HEK293 (cell line): ENCODE measurements at regions of chr10 and their contacts with region 1.

Region 1: DNA sequence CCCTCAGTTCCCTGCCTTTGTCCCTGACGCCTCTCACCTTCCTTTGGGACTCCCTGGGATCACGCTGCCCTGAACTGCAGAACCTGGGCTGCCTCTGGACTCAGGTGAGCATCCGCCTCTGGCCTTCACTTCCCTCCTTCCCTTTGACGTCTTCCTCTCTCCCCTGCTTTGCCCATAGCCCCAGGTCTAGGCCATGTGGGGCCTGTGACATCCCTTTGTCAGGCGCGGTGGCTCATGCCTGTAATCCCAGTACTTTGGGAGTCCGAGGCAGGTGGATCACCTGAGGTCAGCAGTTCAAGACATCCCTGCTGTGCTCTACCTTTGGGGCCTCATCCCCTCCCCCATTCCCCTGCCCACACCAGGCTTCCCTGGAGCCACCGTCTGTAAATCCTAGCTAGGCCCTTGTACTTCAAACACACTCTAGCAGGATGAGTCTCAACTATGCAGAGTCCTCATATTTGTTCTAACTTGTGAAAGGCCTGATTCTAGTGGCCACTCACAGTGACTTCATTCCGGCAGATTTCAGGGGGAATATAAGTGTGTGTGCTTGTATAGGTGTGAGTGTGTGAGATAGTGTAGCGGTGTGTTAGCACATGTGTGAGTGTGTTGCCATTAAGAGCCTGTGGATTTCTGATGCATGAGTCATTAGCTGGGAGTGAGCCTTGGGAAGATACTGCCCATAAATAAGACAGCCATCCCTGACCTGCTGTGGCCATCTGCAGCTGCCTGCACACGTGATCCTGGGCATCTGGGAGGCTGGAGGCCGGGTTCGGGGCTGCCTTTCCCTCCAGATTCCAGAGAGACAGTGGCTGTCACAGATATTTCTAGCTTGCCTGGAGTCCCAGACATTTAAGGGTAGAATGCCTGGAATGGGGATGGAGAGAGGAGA is 1.8 kb upstream of the NEURL1 start:
- H3K4me3 ChIP-seq: no peak overlapping the region
- H3K27ac ChIP-seq: no peak overlapping the region
- H3K4me1 ChIP-seq: no peaks in the 10 kb centered on the region
- CTCF ChIP-seq: no peak

Region 2: GRCh38 chr10:103125323-103126267 is 366.1 kb before region 1 on chr10:
- CTCF ChIA-PET with region 1: no interaction called
- POLR2A ChIA-PET with region 1: no interaction called
- H3K4me3 ChIP-seq: no peak overlapping the region
- H3K27ac ChIP-seq: no peak overlapping the region
- H3K4me1 ChIP-seq: peaks cover 31% of the 10 kb centered on the region
- CTCF ChIP-seq: no peak

Region 3: DNA sequence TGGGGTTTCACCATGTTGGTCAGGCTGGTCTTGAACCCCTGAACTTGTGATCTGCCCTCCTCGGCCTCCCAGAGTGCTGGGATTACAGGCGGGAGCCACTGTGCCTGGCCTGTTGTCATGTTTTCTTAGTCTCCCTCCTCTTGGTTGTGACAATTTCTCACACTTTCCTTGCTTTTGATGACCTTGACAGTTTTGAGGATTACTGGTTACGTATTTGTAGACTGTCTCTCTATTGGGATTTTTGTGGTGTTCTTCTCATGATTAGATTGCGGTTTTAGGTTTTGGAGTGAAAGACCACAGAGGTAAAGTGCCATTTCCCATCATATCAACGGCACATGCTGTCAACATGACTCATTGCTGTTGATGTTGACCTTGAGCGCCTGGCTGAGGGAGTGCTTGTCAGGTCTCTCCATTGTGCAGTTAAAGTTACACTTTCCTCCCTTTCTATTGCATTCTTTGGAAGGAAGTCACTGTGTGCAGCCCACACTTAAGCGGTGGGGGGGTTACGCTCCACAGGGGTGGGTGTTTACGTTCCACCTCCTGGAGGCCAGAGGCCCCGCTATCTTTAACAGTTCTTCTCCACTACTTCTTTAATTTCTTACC is 12.5 kb after region 1 on chr10:
- CTCF ChIA-PET with region 1: interaction called, 5 read pairs
- POLR2A ChIA-PET with region 1: interaction called, 15 read pairs
- H3K4me3 ChIP-seq: no peak overlapping the region
- H3K27ac ChIP-seq: no peak overlapping the region; the same call in 1 of the 2 replicates
- H3K4me1 ChIP-seq: peaks cover 4% of the 10 kb centered on the region; the same call in 1 of the 2 replicates
- CTCF ChIP-seq: no peak

Region 4: DNA sequence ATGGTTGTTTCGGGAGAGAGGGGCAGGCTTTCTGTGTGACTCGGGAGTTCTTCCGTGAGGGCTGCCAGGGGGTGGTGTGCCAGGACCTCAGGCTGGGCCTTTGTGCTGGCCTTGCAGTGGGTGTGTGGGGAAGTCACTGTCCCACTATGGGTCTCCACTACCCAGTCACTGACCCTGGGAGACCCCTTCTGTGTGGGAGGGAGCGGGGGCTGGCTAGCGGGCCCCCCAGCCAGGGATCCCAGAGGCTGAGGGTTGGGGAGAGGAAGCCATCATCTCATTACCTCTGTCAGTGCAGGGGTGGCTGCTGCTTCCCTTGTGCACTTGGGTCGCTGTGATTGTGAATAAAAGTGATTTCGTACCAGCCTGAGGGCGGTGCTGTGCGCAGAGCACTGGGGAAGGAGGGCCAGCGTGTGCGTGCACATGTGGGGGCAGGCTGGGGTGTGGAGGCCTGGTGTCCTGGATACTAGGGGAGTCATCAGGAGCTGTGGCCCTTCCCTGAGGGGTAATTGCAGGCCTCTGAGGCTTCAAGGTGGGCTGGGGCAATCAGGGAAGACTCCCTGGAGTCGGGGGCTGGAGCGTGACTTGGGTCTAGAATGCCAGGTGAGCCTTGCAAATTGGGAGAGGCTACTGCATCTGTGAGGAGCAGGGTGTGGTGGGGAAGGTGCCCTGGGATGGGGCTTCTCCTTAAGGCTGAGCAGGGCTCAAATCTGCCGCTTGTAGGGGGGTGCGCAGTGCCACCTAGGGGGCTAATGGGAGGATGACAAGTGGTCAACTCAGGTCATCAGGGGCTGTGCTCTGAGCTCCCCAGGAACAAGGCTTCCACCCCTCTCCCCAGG is 100.7 kb after region 1 on chr10:
- CTCF ChIA-PET with region 1: interaction called, 16 read pairs
- POLR2A ChIA-PET with region 1: no interaction called
- H3K4me3 ChIP-seq: no peak overlapping the region
- H3K27ac ChIP-seq: no peak overlapping the region
- H3K4me1 ChIP-seq: no peaks in the 10 kb centered on the region
- CTCF ChIP-seq: peak; percentile 79

Region 5: GRCh38 chr10:103696411-103697145 is 204.8 kb after region 1 on chr10:
- CTCF ChIA-PET with region 1: no interaction called
- POLR2A ChIA-PET with region 1: no interaction called
- H3K4me3 ChIP-seq: no peak overlapping the region
- H3K27ac ChIP-seq: no peak overlapping the region; the same call in 1 of the 2 replicates
- H3K4me1 ChIP-seq: no peaks in the 10 kb centered on the region; the same call in 1 of the 2 replicates
- CTCF ChIP-seq: peak; percentile 79